ENCODE measurements at regions of chr9 and their contacts with region 1.

Region 1: DNA sequence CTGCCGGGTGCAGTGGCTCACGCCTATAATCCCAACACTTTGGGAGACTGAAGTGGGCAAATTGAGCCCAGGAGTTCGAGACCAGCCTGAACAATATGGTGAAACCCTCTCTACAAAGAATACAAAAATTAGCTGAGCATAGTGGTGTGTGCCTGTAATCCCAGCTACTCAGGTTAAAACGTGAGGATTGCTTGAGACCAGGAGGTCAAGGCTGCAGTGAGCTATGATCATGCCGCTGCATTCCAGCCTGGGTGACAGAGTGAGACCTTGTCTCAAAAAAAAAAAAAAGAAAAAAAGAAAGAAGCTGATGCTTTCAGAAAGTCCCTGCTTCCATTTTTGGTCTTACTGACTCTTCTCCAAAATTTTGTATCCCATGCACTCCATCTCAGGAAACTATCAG is 31.3 kb downstream of the SNAPC3 start:
- DNase-seq: no peak
- H3K4me3 Mint-ChIP-seq: no peak overlapping the region
- H3K27ac Mint-ChIP-seq: peak overlapping the region; percentile 30
- H3K4me1 Mint-ChIP-seq: no peaks in the 10 kb centered on the region
- H3K27me3 Mint-ChIP-seq: no peaks in the 10 kb centered on the region

Region 2: GRCh38 chr9:15390205-15390604 is 63.8 kb before region 1 on chr9:
- CTCF ChIA-PET with region 1: no interaction called
- intact Hi-C with region 1: loop called (anchors 10 kb)
- DNase-seq: no peak
- H3K4me3 Mint-ChIP-seq: no peak overlapping the region
- H3K27ac Mint-ChIP-seq: no peak overlapping the region
- H3K4me1 Mint-ChIP-seq: no peaks in the 10 kb centered on the region
- H3K27me3 Mint-ChIP-seq: no peaks in the 10 kb centered on the region

Measured in activated naive CD4-positive, alpha-beta T cell treated with anti-CD3 and anti-CD28 coated beads for 36 hours (primary cell).